HCT116 (cell line): ENCODE measurements at regions of chr10 and their contacts with region 1.

Region 1: DNA sequence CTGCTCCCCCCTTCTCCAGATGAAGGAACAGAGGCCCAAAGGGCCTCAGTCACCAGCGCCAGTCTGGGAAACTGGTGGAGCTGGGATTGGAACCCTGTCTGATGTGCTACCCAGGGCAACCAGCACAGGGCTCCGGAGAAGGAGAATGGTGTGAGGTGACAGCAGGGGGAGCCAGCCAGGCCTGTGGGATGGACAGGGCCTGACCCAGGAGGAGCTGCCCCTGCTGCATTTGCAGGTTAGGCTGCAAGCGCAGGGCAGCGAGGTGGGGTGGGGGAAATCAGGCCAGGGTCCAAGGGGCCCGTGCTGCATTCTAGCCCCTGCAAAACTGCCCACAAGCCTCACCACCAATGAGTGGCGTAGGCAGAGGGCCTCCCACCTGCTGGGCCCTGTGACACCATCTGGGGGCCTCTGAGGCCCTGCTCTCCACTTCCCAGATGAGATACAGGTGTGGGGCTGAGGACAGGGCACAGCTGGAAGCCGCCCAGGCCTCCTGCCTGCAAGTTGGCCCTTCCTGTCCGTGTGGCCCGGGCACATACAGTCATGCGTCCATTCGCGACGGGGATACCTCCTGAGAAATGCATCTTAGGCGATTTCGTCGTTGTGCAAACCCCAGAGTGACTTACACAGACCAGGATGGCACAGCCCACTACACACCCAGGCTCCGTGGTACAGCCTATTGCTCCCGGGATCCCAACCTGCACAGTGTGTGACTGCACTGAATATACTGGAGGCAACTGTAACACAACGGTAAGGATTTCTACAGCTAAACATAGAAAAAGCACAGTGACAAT is 45.3 kb downstream of the RASGEF1A start:
- DNase-seq: no peak
- ATAC-seq: peak; percentile 90
- H3K4me3 ChIP-seq: no peak overlapping the region
- H3K27ac ChIP-seq: no peak overlapping the region
- H3K4me1 ChIP-seq: peaks cover 0 to 7% of the 10 kb centered on the region in 2 experiments; a peak in 2 of 4 replicates
- H3K27me3 ChIP-seq: no peaks in the 10 kb centered on the region
- CTCF ChIP-seq: peak; percentile 40 to 47 (median 45); a peak in 5 of 6 replicates
- POLR2A ChIP-seq: no peak
- RAD21 ChIP-seq: no peak; the same call in 1 of the 2 replicates

Region 2: DNA sequence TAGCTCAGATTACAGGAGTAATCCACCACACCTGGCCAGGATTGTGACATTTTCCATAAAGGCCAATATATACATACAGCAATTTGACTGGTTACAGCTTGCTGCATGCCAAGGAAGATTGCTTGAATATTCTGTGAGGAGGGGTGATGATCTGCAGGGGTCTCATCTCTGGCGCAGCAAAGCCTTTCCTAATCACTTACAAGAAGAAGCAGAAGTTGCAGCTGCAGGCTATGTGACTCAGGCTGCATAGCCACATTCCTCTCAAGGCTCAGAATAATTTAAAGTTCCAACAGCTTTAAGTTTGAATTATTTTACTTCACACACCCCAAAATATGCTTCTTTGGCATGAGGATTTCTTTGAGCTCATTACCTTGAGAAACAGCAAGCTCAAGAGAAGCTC is 56.6 kb after region 1 on chr10:
- CTCF ChIA-PET with region 1: no interaction called
- POLR2A ChIA-PET with region 1: no interaction called
- RAD21 ChIA-PET with region 1: no interaction called
- intact Hi-C with region 1: no loop called
- DNase-seq: no peak
- ATAC-seq: no peak
- H3K4me3 ChIP-seq: no peak overlapping the region
- H3K27ac ChIP-seq: no peak overlapping the region
- H3K4me1 ChIP-seq: no peaks in the 10 kb centered on the region
- H3K27me3 ChIP-seq: peaks cover 14% of the 10 kb centered on the region
- CTCF ChIP-seq: no peak
- POLR2A ChIP-seq: no peak
- RAD21 ChIP-seq: no peak

Region 3: DNA sequence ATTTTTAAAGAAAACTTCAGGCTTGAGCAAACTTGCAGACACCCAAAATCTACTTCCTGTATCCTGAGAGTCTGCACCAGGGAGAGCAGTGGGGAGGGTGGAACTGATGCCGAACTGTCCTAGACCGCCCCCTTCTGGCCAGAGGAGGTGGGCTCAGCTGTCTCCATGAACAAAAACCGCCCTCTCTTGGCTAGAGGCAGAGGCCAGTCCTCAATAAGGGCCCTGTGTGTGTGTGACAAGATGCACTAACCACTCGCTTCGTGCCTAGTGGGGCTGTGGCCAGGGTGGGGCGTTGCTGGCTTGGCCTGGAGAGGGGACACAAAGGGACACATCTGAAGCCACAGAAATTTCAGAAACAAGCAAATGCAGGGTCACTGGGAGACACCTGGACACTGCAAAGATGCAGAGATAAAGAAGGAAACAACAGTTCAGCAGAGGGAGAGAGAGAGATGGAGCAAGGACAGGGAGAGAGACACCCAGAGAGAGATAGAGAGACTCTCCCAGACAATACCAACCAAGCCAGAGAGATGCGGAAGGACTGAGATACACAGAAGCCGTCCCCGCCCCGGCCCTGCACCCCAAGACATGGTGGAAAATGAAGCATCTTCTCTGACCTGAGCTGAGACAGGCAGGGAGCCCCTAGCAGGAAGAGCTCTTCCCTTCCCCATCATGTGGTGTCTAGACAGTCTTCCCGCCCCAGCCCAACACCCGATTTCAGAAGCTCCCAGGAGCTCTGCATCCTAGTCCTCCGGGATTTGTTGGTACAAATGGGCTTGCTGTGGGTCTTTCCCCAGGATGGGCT is 127.1 kb after region 1 on chr10:
- CTCF ChIA-PET with region 1: interaction called, 4 read pairs
- POLR2A ChIA-PET with region 1: no interaction called
- RAD21 ChIA-PET with region 1: no interaction called
- intact Hi-C with region 1: loop called (anchors 5 kb)
- DNase-seq: peak; percentile 52
- ATAC-seq: peak; percentile 98
- H3K4me3 ChIP-seq: no peak overlapping the region
- H3K27ac ChIP-seq: no peak overlapping the region
- H3K4me1 ChIP-seq: peaks cover 6 to 26% of the 10 kb centered on the region in 2 experiments
- H3K27me3 ChIP-seq: no peaks in the 10 kb centered on the region
- CTCF ChIP-seq: peak; percentile 97 to 99 (median 98)
- POLR2A ChIP-seq: no peak
- RAD21 ChIP-seq: peak; percentile 97

Region 4: GRCh38 chr10:43461950-43462349 is 240.3 kb after region 1 on chr10:
- CTCF ChIA-PET with region 1: no interaction called
- POLR2A ChIA-PET with region 1: no interaction called
- RAD21 ChIA-PET with region 1: no interaction called
- intact Hi-C with region 1: loop called (anchors 5 kb)
- DNase-seq: peak; percentile 80
- ATAC-seq: peak; percentile 85
- H3K4me3 ChIP-seq: no peak overlapping the region
- H3K27ac ChIP-seq: no peak overlapping the region
- H3K4me1 ChIP-seq: no peaks in the 10 kb centered on the region; a peak in 1 of 4 replicates
- H3K27me3 ChIP-seq: no peaks in the 10 kb centered on the region
- CTCF ChIP-seq: peak; percentile 62 to 78 (median 76)
- POLR2A ChIP-seq: no peak
- RAD21 ChIP-seq: peak; percentile 84